ENCODE measurements at regions of chr13 and their contacts with region 1.

Region 1: GRCh38 chr13:80342471-80343380 is 1.8 kb upstream of the SPRY2 start:
- DNase-seq: peak; percentile 56
- H3K4me3 Mint-ChIP-seq: peak overlapping the region; percentile 17
- H3K27ac Mint-ChIP-seq: no peak overlapping the region
- H3K4me1 Mint-ChIP-seq: peaks cover 18% of the 10 kb centered on the region
- H3K27me3 Mint-ChIP-seq: peaks cover 45% of the 10 kb centered on the region

Region 2: GRCh38 chr13:80048802-80049201 is 293.9 kb before region 1 on chr13:
- intact Hi-C with region 1: loop called (anchors 1 kb)
- DNase-seq: peak; percentile 32
- H3K4me3 Mint-ChIP-seq: no peak overlapping the region
- H3K27ac Mint-ChIP-seq: peak overlapping the region; percentile 10
- H3K4me1 Mint-ChIP-seq: peaks cover 21% of the 10 kb centered on the region
- H3K27me3 Mint-ChIP-seq: peaks cover 5% of the 10 kb centered on the region

Measured in activated T-helper 1 cell treated with anti-CD3 and anti-CD28 coated beads, Interleukin-12 subunit alpha, Interleukin-12 subunit beta, Interleukin-2, Interleukin-4 antibody, amounts not matched to agents 30 ng/mL and 10 ng/mL and 1 ng/mL, durations not matched to agents 14 hours and 24 hours and 36 hours (primary cell).